Endothelial cell of umbilical vein (primary cell): ENCODE measurements at regions of chr6 and their contacts with region 1.

Region 1: DNA sequence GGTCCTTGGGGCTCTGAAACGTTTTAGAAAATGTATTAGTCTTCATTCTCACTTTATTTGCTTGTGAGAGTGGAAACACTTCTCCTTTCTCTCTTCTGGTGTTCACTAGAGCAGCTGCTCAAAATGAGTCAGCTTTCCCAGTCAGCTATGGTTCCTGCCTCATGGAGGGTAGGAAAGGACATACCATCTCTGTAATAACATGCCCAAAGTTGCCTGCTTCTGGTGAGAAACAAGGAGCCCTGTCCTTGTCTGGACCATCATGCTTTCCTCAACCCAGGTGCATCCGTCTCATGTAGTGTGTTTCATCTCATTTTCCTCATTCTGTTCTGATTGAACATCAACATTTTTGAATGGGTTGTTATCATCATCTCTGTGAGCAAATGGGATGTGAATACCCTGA is 17.1 kb upstream of the TINAG start:
- DNase-seq: peak; percentile 94
- H3K4me3 ChIP-seq: no peak overlapping the region
- H3K27ac ChIP-seq: peak overlapping the region; percentile 95
- H3K4me1 ChIP-seq: peaks cover 33% of the 10 kb centered on the region
- H3K27me3 ChIP-seq: no peaks in the 10 kb centered on the region
- CTCF ChIP-seq: no peak
- POLR2A ChIP-seq: peak; percentile 22

Region 2: DNA sequence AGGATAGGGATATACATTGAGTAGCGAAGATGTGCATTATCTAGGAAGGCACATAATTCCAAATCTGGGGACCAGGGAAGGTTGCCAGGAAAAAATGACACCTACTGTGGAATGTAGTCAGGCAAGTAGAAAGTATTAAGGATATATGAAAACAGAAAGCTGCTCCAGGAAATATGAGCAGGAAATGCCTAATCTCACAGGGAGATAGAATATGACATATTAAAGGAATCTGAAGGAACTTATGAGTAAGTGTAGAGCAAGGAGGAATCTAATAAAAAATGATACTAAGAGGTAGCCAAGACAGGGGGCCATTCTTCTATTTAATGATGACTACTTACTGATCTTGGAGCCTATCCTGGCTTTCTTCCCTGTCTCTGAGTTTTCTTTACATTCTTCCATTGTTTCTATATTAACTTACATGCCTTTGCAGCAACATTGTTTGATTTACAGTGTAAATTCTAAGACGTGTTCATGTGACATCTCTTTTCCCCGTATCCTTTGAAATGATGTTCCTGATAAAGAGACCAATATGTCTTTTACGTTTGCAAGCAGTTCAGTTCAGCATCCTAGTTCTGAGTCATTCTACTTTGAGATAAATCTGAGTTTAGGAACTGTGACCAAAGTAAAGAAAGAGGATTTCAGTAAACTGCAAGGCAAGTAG is 75.7 kb after region 1 on chr6:
- CTCF ChIA-PET with region 1: no interaction called
- POLR2A ChIA-PET with region 1: no interaction called
- dilution Hi-C with region 1: no loop called
- intact Hi-C with region 1: loop called (anchors 1 kb)
- DNase-seq: peak; percentile 71
- H3K4me3 ChIP-seq: peak overlapping the region in 1 of 3 experiments; percentile 3
- H3K27ac ChIP-seq: peak overlapping the region; percentile 37
- H3K4me1 ChIP-seq: peaks cover 12% of the 10 kb centered on the region
- H3K27me3 ChIP-seq: no peaks in the 10 kb centered on the region
- CTCF ChIP-seq: no peak
- POLR2A ChIP-seq: no peak

Region 3: GRCh38 chr6:54431466-54431865 is 140.3 kb after region 1 on chr6:
- CTCF ChIA-PET with region 1: no interaction called
- POLR2A ChIA-PET with region 1: no interaction called
- dilution Hi-C with region 1: no loop called
- intact Hi-C with region 1: loop called (anchors 5 kb)
- DNase-seq: peak; percentile 73
- H3K4me3 ChIP-seq: no peak overlapping the region
- H3K27ac ChIP-seq: no peak overlapping the region
- H3K4me1 ChIP-seq: peaks cover 10% of the 10 kb centered on the region
- H3K27me3 ChIP-seq: peaks cover 25 to 26% of the 10 kb centered on the region in 2 experiments
- CTCF ChIP-seq: no peak
- POLR2A ChIP-seq: no peak